Gastrocnemius medialis (tissue), 4 donors: ENCODE measurements at regions of chr4 and their contacts with region 1.

Region 1: DNA sequence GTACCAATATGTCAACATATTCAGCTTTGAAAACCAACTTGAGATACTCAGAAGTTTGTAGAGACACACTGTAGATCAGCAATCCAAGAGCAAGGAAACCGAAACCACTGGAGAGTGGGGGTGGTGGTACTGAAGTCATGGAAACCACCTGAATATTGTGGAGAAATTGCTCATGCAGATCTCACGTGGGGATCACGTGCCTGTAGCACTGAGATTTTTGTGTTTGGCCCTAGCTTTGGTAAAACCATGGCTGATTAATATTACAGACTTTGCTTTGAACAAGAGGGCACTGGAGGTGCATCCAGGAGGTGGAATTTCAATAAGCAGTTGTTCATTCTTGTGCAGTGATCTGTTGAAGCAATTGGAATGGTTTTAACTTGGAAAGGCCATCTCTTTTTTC is 47.2 kb downstream of the GBA3 start:
- DNase-seq: no peak
- ATAC-seq: no peak
- H3K4me3 ChIP-seq: no peak overlapping the region
- H3K27ac ChIP-seq: no peak overlapping the region
- H3K4me1 ChIP-seq: no peaks in the 10 kb centered on the region
- H3K27me3 ChIP-seq: no peaks in the 10 kb centered on the region
- CTCF ChIP-seq: no peak
- POLR2A ChIP-seq: no peak

Region 2: GRCh38 chr4:22287631-22288030 is 452.3 kb before region 1 on chr4:
- in situ Hi-C with region 1: no loop called
- intact Hi-C with region 1: no loop called
- DNase-seq: no peak
- ATAC-seq: no peak
- H3K4me3 ChIP-seq: no peak overlapping the region
- H3K27ac ChIP-seq: no peak overlapping the region
- H3K4me1 ChIP-seq: no peaks in the 10 kb centered on the region
- H3K27me3 ChIP-seq: no peaks in the 10 kb centered on the region
- CTCF ChIP-seq: no peak
- POLR2A ChIP-seq: no peak

Region 3: DNA sequence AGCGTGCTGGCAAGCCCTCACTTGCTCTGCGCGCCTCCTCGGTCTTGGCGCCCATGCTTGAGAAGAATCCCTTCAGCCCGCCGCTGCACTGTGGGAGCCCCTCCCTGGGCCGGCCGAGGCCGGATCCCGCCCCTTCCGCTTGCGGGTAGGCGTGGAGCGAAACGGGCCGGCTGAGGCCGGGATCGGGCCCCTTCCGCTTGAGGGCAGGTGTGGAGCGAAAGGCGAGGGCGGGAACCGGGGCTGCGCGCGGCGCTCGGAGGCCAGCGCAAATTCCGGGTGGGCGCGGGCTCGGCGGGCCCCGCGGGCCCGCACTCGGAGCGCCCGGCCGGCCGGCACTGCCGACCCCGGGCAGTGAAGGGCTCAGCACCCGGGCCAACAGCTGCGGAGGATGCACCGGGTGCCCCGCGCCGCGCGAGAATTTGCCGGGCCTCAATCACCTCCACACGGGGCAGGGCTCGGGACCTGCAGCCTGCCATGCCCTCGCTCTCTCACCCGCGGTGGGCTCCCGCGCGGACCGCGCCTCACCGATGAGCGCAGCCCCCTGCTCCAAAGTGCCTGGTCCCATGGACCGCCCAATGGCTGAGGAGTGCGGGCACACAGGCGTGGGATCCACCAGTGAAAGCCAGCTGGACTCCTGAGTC is 105.3 kb before region 1 on chr4:
- in situ Hi-C with region 1: loop called in 1 of 4 experiments (anchors 25 kb)
- intact Hi-C with region 1: no loop called
- DNase-seq: no peak
- ATAC-seq: no peak
- H3K4me3 ChIP-seq: no peak overlapping the region
- H3K27ac ChIP-seq: no peak overlapping the region
- H3K4me1 ChIP-seq: no peaks in the 10 kb centered on the region
- H3K27me3 ChIP-seq: no peaks in the 10 kb centered on the region
- CTCF ChIP-seq: no peak
- POLR2A ChIP-seq: no peak